Activated T-helper 2 cell treated with anti-CD3 and anti-CD28 coated beads, Interferon-gamma antibody, Interleukin-2, Interleukin-4, amounts not matched to agents 10 μg/mL and 5 μg/mL and 100 μg/mL, durations not matched to agents 14 hours and 24 hours and 36 hours (primary cell): ENCODE measurements at regions of chr5 and their contacts with region 1.

Region 1: GRCh38 chr5:171913987-171914273 is 92.5 kb downstream of the FBXW11 start:
- DNase-seq: no peak
- H3K4me3 Mint-ChIP-seq: no peak overlapping the region
- H3K27ac Mint-ChIP-seq: no peak overlapping the region
- H3K4me1 Mint-ChIP-seq: peaks cover 30% of the 10 kb centered on the region
- H3K27me3 Mint-ChIP-seq: no peaks in the 10 kb centered on the region

Region 2: GRCh38 chr5:172052450-172053236 is 138.7 kb after region 1 on chr5:
- intact Hi-C with region 1: no loop called
- DNase-seq: no peak
- H3K4me3 Mint-ChIP-seq: no peak overlapping the region
- H3K27ac Mint-ChIP-seq: no peak overlapping the region
- H3K4me1 Mint-ChIP-seq: no peaks in the 10 kb centered on the region
- H3K27me3 Mint-ChIP-seq: no peaks in the 10 kb centered on the region

Region 3: GRCh38 chr5:172162323-172162986 is 248.5 kb after region 1 on chr5:
- intact Hi-C with region 1: no loop called
- DNase-seq: no peak
- H3K4me3 Mint-ChIP-seq: no peak overlapping the region
- H3K27ac Mint-ChIP-seq: peak overlapping the region; percentile 29
- H3K4me1 Mint-ChIP-seq: peaks cover 24% of the 10 kb centered on the region
- H3K27me3 Mint-ChIP-seq: no peaks in the 10 kb centered on the region

Region 4: GRCh38 chr5:172293054-172293744 is 379.3 kb after region 1 on chr5:
- intact Hi-C with region 1: loop called (anchors 2 kb)
- DNase-seq: peak; percentile 49
- H3K4me3 Mint-ChIP-seq: no peak overlapping the region
- H3K27ac Mint-ChIP-seq: no peak overlapping the region
- H3K4me1 Mint-ChIP-seq: peaks cover 3% of the 10 kb centered on the region
- H3K27me3 Mint-ChIP-seq: peaks cover 12% of the 10 kb centered on the region

Region 5: DNA sequence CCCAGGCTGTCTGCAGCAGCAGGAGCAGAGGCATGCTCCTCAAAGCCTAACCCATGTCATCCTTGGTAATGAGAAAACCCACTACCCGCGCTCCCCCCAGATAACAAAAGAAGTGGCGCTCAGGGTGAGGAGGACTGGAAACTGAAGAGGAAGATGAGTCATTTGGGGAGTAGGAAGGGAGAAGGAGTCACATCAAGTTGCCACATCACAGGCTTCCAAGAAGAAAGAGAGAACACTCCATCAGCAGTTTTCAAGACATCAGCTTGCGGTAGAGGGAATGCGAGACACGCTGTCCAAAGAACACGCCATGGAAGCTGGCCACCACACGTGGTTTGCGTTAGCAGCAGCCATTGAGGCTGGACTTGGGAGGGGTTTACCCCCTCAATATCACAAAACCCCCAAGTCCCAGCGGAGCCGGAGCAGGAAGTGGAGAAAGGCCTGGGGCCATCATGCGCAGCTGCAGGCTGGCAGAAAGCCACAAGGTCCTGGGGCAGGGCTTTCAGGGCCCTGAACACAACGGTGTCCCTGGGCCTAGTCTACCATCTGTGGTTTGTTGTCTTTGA is 498.9 kb after region 1 on chr5:
- intact Hi-C with region 1: no loop called
- DNase-seq: no peak
- H3K4me3 Mint-ChIP-seq: no peak overlapping the region
- H3K27ac Mint-ChIP-seq: peak overlapping the region; percentile 1
- H3K4me1 Mint-ChIP-seq: peaks cover 24% of the 10 kb centered on the region
- H3K27me3 Mint-ChIP-seq: no peaks in the 10 kb centered on the region